Activated T-helper 2 cell treated with anti-CD3 and anti-CD28 coated beads, Interferon-gamma antibody, Interleukin-2, Interleukin-4, amounts not matched to agents 10 μg/mL and 5 μg/mL and 100 μg/mL, durations not matched to agents 14 hours and 24 hours and 36 hours (primary cell): ENCODE measurements at regions of chr3 and their contacts with region 1.

Region 1: DNA sequence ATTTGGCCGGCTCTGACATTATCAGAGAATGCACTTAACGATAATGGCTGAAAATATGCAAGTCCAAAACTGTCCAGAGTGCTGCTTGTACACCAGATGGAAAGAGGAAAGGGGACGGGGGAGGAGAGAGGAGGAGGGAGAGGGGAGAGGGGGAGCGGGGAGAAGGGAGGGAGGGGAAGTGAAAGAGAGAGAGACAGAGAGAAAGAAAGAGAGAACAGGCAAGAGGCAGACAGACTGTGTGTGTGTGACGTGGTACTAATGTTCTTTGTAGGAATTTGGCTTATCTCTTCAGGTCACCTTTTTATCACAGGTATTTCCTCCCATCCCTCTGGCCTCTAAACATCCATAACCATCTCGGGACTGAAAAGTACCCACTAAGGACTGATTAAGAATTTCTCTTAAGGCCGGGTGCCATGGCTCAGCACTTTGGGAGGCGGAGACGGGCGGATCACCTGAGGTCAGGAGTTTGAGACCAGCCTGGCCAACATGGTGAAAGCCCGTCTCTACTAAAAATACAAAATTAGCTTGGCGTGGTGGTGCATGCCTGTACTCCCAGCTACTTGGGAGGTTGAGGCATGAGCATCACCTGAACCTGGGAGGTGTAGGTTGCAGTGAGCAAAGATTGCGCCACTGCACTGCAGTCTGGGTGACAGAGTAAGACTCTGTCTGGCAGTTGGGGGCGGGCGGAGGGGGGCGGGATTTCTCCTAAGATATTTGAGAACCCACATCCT is 75.2 kb upstream of the LMOD3 start:
- DNase-seq: no peak
- H3K4me3 Mint-ChIP-seq: peak overlapping the region; percentile 90
- H3K27ac Mint-ChIP-seq: peak overlapping the region; percentile 91
- H3K4me1 Mint-ChIP-seq: peaks cover 45% of the 10 kb centered on the region
- H3K27me3 Mint-ChIP-seq: no peaks in the 10 kb centered on the region

Region 2: GRCh38 chr3:69084326-69085167 is 113.1 kb before region 1 on chr3 and contains the start of gene ARL6IP5:
- intact Hi-C with region 1: loop called (anchors 2 kb)
- DNase-seq: peak; percentile 89
- H3K4me3 Mint-ChIP-seq: peak within 1 kb of the TSS; percentile 96
- H3K27ac Mint-ChIP-seq: peak within 1 kb of the TSS; percentile 98
- H3K4me1 Mint-ChIP-seq: peaks cover 53% of the 10 kb centered on the region
- H3K27me3 Mint-ChIP-seq: no peaks in the 10 kb centered on the region
- total RNA-seq, gene ARL6IP5: 124 and 127 TPM in 2 replicates

Region 3: GRCh38 chr3:69181592-69182211 is 15.9 kb before region 1 on chr3:
- intact Hi-C with region 1: loop called (anchors 2 kb)
- DNase-seq: no peak
- H3K4me3 Mint-ChIP-seq: no peak overlapping the region
- H3K27ac Mint-ChIP-seq: peak overlapping the region; percentile 24
- H3K4me1 Mint-ChIP-seq: peaks cover 22% of the 10 kb centered on the region
- H3K27me3 Mint-ChIP-seq: no peaks in the 10 kb centered on the region

Region 4: GRCh38 chr3:69236812-69237707 is 39.4 kb after region 1 on chr3:
- intact Hi-C with region 1: loop called (anchors 2 kb)
- DNase-seq: no peak
- H3K4me3 Mint-ChIP-seq: peak overlapping the region; percentile 71
- H3K27ac Mint-ChIP-seq: peak overlapping the region; percentile 9
- H3K4me1 Mint-ChIP-seq: peaks cover 18% of the 10 kb centered on the region
- H3K27me3 Mint-ChIP-seq: no peaks in the 10 kb centered on the region

Region 5: GRCh38 chr3:69282181-69282580 is 84.6 kb after region 1 on chr3:
- intact Hi-C with region 1: loop called (anchors 1 kb)
- DNase-seq: no peak
- H3K4me3 Mint-ChIP-seq: peak overlapping the region; percentile 37
- H3K27ac Mint-ChIP-seq: peak overlapping the region; percentile 81
- H3K4me1 Mint-ChIP-seq: peaks cover 24% of the 10 kb centered on the region
- H3K27me3 Mint-ChIP-seq: no peaks in the 10 kb centered on the region

Region 6: GRCh38 chr3:69306239-69307185 is 108.9 kb after region 1 on chr3:
- intact Hi-C with region 1: loop called (anchors 1 kb)
- DNase-seq: peak; percentile 65
- H3K4me3 Mint-ChIP-seq: no peak overlapping the region
- H3K27ac Mint-ChIP-seq: peak overlapping the region; percentile 75
- H3K4me1 Mint-ChIP-seq: peaks cover 26% of the 10 kb centered on the region
- H3K27me3 Mint-ChIP-seq: peaks cover 1% of the 10 kb centered on the region

Region 7: DNA sequence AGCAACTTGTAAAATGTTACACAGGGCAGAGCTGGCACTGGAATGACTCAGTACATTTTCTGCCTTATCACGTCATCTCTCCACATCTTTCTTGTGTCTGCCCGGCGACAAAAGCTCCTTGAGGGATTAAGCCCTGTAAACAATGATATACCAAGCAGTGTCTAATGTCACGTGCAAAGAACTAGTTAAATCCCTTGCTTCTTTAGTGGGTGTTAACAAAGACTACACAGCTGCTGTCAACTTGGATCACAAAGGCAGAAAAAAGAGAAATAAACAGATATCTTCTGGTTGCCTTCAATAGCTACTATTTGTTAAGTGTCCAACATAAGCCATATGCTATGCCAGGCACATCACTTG is 236.3 kb after region 1 on chr3:
- intact Hi-C with region 1: loop called (anchors 2 kb)
- DNase-seq: no peak
- H3K4me3 Mint-ChIP-seq: no peak overlapping the region
- H3K27ac Mint-ChIP-seq: peak overlapping the region; percentile 54
- H3K4me1 Mint-ChIP-seq: peaks cover 41% of the 10 kb centered on the region
- H3K27me3 Mint-ChIP-seq: no peaks in the 10 kb centered on the region